IMR-90 (cell line): ENCODE measurements at regions of chr17 and their contacts with region 1.

Region 1: DNA sequence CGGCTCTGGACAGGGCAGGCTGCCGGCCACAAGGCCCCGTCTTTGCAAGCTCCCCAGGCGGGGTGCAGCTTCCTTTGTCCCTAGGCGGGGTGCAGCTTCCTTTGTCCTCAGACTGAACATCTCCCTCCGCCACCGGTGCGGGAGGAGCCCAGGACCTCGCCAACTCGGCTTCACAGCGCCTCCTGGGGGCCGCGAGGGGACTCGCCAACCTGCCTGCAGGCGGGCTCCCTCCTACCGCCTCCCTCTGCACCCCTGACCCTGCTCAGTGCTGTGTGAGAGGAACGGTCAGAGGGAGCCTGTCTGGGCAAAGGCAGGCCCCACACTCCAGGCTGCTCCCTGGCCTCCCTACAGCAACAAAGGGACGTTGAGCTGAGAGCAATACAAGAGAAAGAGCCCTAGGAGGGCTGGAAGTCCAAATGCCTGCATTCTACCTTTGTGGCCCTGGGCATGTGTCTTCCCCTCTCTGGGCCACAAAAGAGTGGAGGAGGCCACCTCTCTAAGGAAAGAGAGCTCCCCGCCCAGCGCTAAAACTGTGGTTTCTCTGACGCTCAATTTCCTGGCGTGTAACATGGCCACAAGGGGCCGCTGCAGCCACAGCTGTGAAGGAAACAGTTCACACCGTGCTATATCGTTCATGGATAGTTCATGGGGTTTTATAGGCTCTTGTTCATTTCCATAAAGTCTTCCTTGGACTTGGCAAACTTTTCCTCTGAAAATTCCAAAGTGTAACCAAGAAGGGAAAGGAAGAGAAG is 20.9 kb upstream of the KRT19 start:
- DNase-seq: peak; percentile 86
- ATAC-seq: peak; percentile 80
- H3K4me3 ChIP-seq: no peak overlapping the region
- H3K27ac ChIP-seq: peak overlapping the region; percentile 72
- H3K4me1 ChIP-seq: peaks cover 21% of the 10 kb centered on the region
- H3K27me3 ChIP-seq: no peaks in the 10 kb centered on the region
- CTCF ChIP-seq: peak; percentile 96
- POLR2A ChIP-seq: peak; percentile 17; the same call in 1 of the 2 replicates
- RAD21 ChIP-seq: peak; percentile 89

Region 2: DNA sequence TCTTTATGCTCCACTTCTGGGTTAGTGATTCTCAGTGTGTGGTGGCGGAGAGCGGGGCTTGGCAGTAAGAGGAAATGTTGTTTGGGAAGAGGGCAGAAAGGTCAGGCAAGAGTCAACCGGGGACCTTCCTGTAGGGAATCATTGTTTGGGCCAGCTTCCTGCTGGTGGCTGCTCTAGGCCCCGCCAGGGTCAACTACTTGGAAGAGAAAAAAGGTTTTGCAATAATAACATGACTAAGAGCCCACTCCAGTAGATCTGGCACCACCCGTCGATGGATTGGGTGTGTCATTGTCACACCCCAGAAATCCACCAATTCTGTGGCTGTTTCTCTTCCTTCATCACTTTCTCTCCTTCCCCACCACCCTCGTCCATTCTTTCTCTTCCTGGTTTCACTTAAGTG is 841.3 kb before region 1 on chr17:
- CTCF ChIA-PET with region 1: no interaction called
- POLR2A ChIA-PET with region 1: no interaction called
- dilution Hi-C with region 1: no loop called
- in situ Hi-C with region 1: no loop called
- intact Hi-C with region 1: no loop called
- DNase-seq: no peak
- ATAC-seq: no peak
- H3K4me3 ChIP-seq: no peak overlapping the region
- H3K27ac ChIP-seq: no peak overlapping the region
- H3K4me1 ChIP-seq: no peaks in the 10 kb centered on the region
- H3K27me3 ChIP-seq: peaks cover 32% of the 10 kb centered on the region
- CTCF ChIP-seq: no peak
- POLR2A ChIP-seq: no peak
- RAD21 ChIP-seq: no peak

Region 3: GRCh38 chr17:40803617-40804082 is 745.4 kb before region 1 on chr17:
- CTCF ChIA-PET with region 1: no interaction called
- POLR2A ChIA-PET with region 1: no interaction called
- dilution Hi-C with region 1: no loop called
- in situ Hi-C with region 1: loop called (anchors 10 kb)
- intact Hi-C with region 1: loop called (anchors 2 kb)
- DNase-seq: peak; percentile 66
- ATAC-seq: peak; percentile 100
- H3K4me3 ChIP-seq: no peak overlapping the region
- H3K27ac ChIP-seq: no peak overlapping the region
- H3K4me1 ChIP-seq: no peaks in the 10 kb centered on the region
- H3K27me3 ChIP-seq: peaks cover 25% of the 10 kb centered on the region
- CTCF ChIP-seq: peak; percentile 92
- POLR2A ChIP-seq: peak; percentile 42; the same call in 1 of the 2 replicates
- RAD21 ChIP-seq: peak; percentile 95

Region 4: GRCh38 chr17:40909351-40909750 is 639.7 kb before region 1 on chr17:
- CTCF ChIA-PET with region 1: interaction called, 6 read pairs
- POLR2A ChIA-PET with region 1: no interaction called
- dilution Hi-C with region 1: no loop called
- in situ Hi-C with region 1: loop called (anchors 5 kb)
- intact Hi-C with region 1: loop called (anchors 1 kb)
- DNase-seq: peak; percentile 98
- ATAC-seq: peak; percentile 93
- H3K4me3 ChIP-seq: no peak overlapping the region
- H3K27ac ChIP-seq: no peak overlapping the region
- H3K4me1 ChIP-seq: peaks cover 10% of the 10 kb centered on the region
- H3K27me3 ChIP-seq: no peaks in the 10 kb centered on the region
- CTCF ChIP-seq: peak; percentile 96
- POLR2A ChIP-seq: 0 out of 2 replicates have a peak, but pooled peaks have one; percentile 53
- RAD21 ChIP-seq: peak; percentile 99

Region 5: DNA sequence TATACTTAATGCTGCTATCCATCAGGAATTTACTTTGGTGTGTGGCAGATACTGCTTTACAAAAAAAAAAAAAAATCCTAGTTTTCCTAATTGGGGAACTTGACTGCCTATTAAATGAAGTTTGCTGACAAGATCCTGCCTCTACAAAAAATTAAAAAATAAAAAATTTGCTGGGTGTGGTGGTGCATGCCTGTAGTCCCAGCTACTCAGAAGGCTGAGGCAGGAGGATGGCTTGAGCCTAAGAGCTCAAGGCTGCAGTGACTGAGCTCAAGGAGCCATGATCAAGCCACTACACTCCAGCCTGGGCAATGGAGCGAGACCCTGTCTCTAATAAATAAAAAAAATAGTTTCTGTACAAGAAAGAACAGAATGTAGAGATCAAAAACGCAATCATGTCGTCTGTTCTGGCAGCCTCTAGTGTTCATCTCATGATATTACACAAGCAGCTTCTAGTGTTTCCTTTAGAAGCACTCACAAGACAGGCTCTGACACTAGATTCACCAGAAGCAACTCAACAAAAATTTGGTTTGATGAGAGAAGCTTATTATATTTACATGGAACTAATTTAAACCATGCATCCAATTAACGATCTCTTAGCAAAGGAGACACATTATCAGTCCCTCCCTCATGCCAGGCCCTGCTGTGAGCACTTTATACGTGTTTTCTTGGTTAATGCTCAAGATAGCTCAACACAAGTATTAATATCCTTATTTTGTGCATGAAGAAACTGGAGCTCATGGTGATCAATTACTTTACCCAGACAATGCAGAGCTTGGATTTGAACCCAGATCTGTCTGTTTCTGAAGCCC is 226.7 kb before region 1 on chr17:
- CTCF ChIA-PET with region 1: interaction called, 10 read pairs
- POLR2A ChIA-PET with region 1: no interaction called
- dilution Hi-C with region 1: no loop called
- in situ Hi-C with region 1: no loop called
- intact Hi-C with region 1: no loop called
- DNase-seq: peak; percentile 79
- ATAC-seq: peak; percentile 97
- H3K4me3 ChIP-seq: no peak overlapping the region
- H3K27ac ChIP-seq: peak overlapping the region; percentile 51; the same call in 1 of the 2 replicates
- H3K4me1 ChIP-seq: peaks cover 2% of the 10 kb centered on the region
- H3K27me3 ChIP-seq: no peaks in the 10 kb centered on the region
- CTCF ChIP-seq: peak; percentile 80
- POLR2A ChIP-seq: no peak
- RAD21 ChIP-seq: peak; percentile 81

Region 6: GRCh38 chr17:41559548-41559947 is 10.5 kb after region 1 on chr17:
- CTCF ChIA-PET with region 1: interaction called, 11 read pairs
- POLR2A ChIA-PET with region 1: no interaction called
- dilution Hi-C with region 1: no loop called
- in situ Hi-C with region 1: no loop called
- intact Hi-C with region 1: no loop called
- DNase-seq: peak; percentile 41
- ATAC-seq: no peak
- H3K4me3 ChIP-seq: no peak overlapping the region
- H3K27ac ChIP-seq: no peak overlapping the region
- H3K4me1 ChIP-seq: no peaks in the 10 kb centered on the region
- H3K27me3 ChIP-seq: peaks cover 64% of the 10 kb centered on the region
- CTCF ChIP-seq: no peak
- POLR2A ChIP-seq: no peak
- RAD21 ChIP-seq: no peak

Region 7: DNA sequence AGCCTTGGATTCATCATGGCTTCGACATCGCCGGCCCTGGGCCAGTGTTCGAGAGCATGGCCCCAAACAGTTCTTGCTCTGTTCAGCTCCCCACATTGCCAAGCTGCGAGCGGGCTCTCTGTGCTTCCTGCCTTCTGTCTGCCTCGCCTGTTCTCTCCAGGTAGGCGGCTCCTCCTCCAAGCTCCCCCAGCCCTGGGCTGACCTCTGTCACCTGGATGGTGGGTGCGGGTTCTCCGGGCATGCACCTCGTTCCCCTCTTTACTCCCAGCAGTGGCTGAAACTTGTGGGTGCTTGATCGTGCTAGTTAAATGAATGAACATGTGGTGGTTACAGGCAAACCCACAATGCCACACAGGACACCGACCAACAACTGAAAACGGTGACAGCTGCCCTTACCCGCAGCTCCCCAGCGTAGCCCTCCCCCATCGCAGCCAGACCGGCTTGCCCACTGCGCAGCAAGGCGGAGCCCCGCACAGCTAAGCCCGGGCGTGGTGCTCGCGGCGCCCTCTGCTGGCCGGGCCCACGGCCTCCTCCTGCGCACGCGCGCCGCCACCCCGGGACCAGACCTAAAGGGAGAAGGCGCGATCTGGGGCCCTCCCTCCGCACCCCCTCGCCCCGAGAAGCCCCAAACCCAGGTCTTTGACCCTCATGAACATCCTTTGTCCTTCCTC is 116.7 kb after region 1 on chr17:
- CTCF ChIA-PET with region 1: interaction called, 49 read pairs
- POLR2A ChIA-PET with region 1: no interaction called
- dilution Hi-C with region 1: no loop called
- in situ Hi-C with region 1: loop called (anchors 5 kb)
- intact Hi-C with region 1: loop called (anchors 1 kb)
- DNase-seq: peak; percentile 74
- ATAC-seq: peak; percentile 90
- H3K4me3 ChIP-seq: peak overlapping the region; percentile 40
- H3K27ac ChIP-seq: peak overlapping the region; percentile 55
- H3K4me1 ChIP-seq: peaks cover 11% of the 10 kb centered on the region
- H3K27me3 ChIP-seq: no peaks in the 10 kb centered on the region
- CTCF ChIP-seq: peak; percentile 94
- POLR2A ChIP-seq: no peak
- RAD21 ChIP-seq: peak; percentile 29; the same call in 1 of the 2 replicates